CD4-positive, alpha-beta memory T cell (primary cell): ENCODE measurements at regions of chr6 and their contacts with region 1.

Region 1: GRCh38 chr6:27188885-27189418 is 58.5 kb upstream of the PRSS16 start:
- DNase-seq: peak; percentile 55 to 69 (median 67)
- H3K4me3 ChIP-seq: peak overlapping the region; percentile 58 to 73
- H3K4me3 Mint-ChIP-seq: peak overlapping the region; percentile 79 to 96 (median 93)
- H3K27ac ChIP-seq: peak overlapping the region; percentile 44
- H3K27ac Mint-ChIP-seq: peak overlapping the region; percentile 49 to 86 (median 73)
- H3K4me1 ChIP-seq: peaks cover 9% of the 10 kb centered on the region
- H3K4me1 Mint-ChIP-seq: peaks cover 2 to 20% (median 15%) of the 10 kb centered on the region in 4 donors
- H3K27me3 ChIP-seq: no peaks in the 10 kb centered on the region
- H3K27me3 Mint-ChIP-seq: no peaks in the 10 kb centered on the region

Region 2: GRCh38 chr6:27126815-27127537 is 62.0 kb before region 1 on chr6:
- CTCF ChIA-PET with region 1: interaction called, 3 read pairs
- POLR2A ChIA-PET with region 1: no interaction called
- intact Hi-C with region 1: loop called (anchors 1 kb)
- DNase-seq: peak; percentile 78 to 86 (median 83)
- H3K4me3 ChIP-seq: peak overlapping the region; percentile 13 to 34
- H3K4me3 Mint-ChIP-seq: peak overlapping the region; percentile 71 to 87 (median 80)
- H3K27ac ChIP-seq: peak overlapping the region; percentile 37
- H3K27ac Mint-ChIP-seq: peak overlapping the region; percentile 79 to 91 (median 89)
- H3K4me1 ChIP-seq: peaks cover 16% of the 10 kb centered on the region
- H3K4me1 Mint-ChIP-seq: peaks cover 14 to 16% (median 16%) of the 10 kb centered on the region in 4 donors
- H3K27me3 ChIP-seq: no peaks in the 10 kb centered on the region
- H3K27me3 Mint-ChIP-seq: no peaks in the 10 kb centered on the region

Region 3: GRCh38 chr6:27237089-27237803 is 48.3 kb after region 1 on chr6:
- CTCF ChIA-PET with region 1: no interaction called
- POLR2A ChIA-PET with region 1: no interaction called
- intact Hi-C with region 1: no loop called
- DNase-seq: peak in 4 of 5 donors; percentile 19 to 46 (median 36)
- H3K4me3 ChIP-seq: no peak overlapping the region
- H3K4me3 Mint-ChIP-seq: peak overlapping the region in 6 of 8 donors; percentile 7 to 71 (median 30)
- H3K27ac ChIP-seq: no peak overlapping the region
- H3K27ac Mint-ChIP-seq: peak overlapping the region in 5 of 7 donors; percentile 22 to 90 (median 87)
- H3K4me1 ChIP-seq: no peaks in the 10 kb centered on the region
- H3K4me1 Mint-ChIP-seq: peaks cover 7 to 29% (median 16%) of the 10 kb centered on the region in 4 donors
- H3K27me3 ChIP-seq: peaks cover 37% of the 10 kb centered on the region
- H3K27me3 Mint-ChIP-seq: peaks cover 61% of the 10 kb centered on the region in 2 donors

Region 4: GRCh38 chr6:27312146-27312949 is 123.4 kb after region 1 on chr6 and contains the start of gene POM121L2:
- CTCF ChIA-PET with region 1: interaction called, 5 read pairs
- POLR2A ChIA-PET with region 1: no interaction called
- intact Hi-C with region 1: loop called (anchors 2 kb)
- DNase-seq: peak; percentile 50 to 68 (median 61)
- H3K4me3 ChIP-seq: peak within 1 kb of the TSS; percentile 44 to 57
- H3K4me3 Mint-ChIP-seq: peak within 1 kb of the TSS; percentile 81 to 86 (median 83)
- H3K27ac ChIP-seq: no peak within 1 kb of the TSS
- H3K27ac Mint-ChIP-seq: peak within 1 kb of the TSS in 3 of 7 donors; percentile 7 to 37 (median 21)
- H3K4me1 ChIP-seq: peaks cover 5% of the 10 kb centered on the region
- H3K4me1 Mint-ChIP-seq: peaks cover 0 to 14% (median 7%) of the 10 kb centered on the region in 4 donors
- H3K27me3 ChIP-seq: peaks cover 26% of the 10 kb centered on the region
- H3K27me3 Mint-ChIP-seq: peaks cover 39 to 55% of the 10 kb centered on the region in 2 donors
- total RNA-seq, gene POM121L2: not detected

Region 5: GRCh38 chr6:27772261-27773001 is 583.5 kb after region 1 on chr6:
- CTCF ChIA-PET with region 1: interaction called, 9 read pairs
- POLR2A ChIA-PET with region 1: no interaction called
- intact Hi-C with region 1: loop called (anchors 1 kb)
- DNase-seq: peak; percentile 82 to 85 (median 84)
- H3K4me3 ChIP-seq: no peak overlapping the region
- H3K4me3 Mint-ChIP-seq: peak overlapping the region in 5 of 8 donors; percentile 0 to 60 (median 51)
- H3K27ac ChIP-seq: no peak overlapping the region
- H3K27ac Mint-ChIP-seq: peak overlapping the region in 5 of 7 donors; percentile 4 to 80 (median 15)
- H3K4me1 ChIP-seq: peaks cover 11% of the 10 kb centered on the region
- H3K4me1 Mint-ChIP-seq: peaks cover 3 to 17% (median 9%) of the 10 kb centered on the region in 4 donors
- H3K27me3 ChIP-seq: peaks cover 5% of the 10 kb centered on the region
- H3K27me3 Mint-ChIP-seq: peaks cover 7 to 26% of the 10 kb centered on the region in 2 donors

Region 6: GRCh38 chr6:29016559-29017427 is 1827.8 kb after region 1 on chr6:
- CTCF ChIA-PET with region 1: no interaction called
- POLR2A ChIA-PET with region 1: no interaction called
- intact Hi-C with region 1: loop called (anchors 1 kb)
- DNase-seq: peak; percentile 79 to 82 (median 81)
- H3K4me3 ChIP-seq: peak overlapping the region; percentile 55 to 58
- H3K4me3 Mint-ChIP-seq: peak overlapping the region; percentile 85 to 97 (median 90)
- H3K27ac ChIP-seq: peak overlapping the region; percentile 9
- H3K27ac Mint-ChIP-seq: peak overlapping the region; percentile 70 to 92 (median 82)
- H3K4me1 ChIP-seq: peaks cover 10% of the 10 kb centered on the region
- H3K4me1 Mint-ChIP-seq: peaks cover 10 to 21% (median 15%) of the 10 kb centered on the region in 4 donors
- H3K27me3 ChIP-seq: no peaks in the 10 kb centered on the region
- H3K27me3 Mint-ChIP-seq: peaks cover 7 to 11% of the 10 kb centered on the region in 2 donors